Aorta (tissue), 5 donors: ENCODE measurements at regions of chr10 and their contacts with region 1.

Region 1: DNA sequence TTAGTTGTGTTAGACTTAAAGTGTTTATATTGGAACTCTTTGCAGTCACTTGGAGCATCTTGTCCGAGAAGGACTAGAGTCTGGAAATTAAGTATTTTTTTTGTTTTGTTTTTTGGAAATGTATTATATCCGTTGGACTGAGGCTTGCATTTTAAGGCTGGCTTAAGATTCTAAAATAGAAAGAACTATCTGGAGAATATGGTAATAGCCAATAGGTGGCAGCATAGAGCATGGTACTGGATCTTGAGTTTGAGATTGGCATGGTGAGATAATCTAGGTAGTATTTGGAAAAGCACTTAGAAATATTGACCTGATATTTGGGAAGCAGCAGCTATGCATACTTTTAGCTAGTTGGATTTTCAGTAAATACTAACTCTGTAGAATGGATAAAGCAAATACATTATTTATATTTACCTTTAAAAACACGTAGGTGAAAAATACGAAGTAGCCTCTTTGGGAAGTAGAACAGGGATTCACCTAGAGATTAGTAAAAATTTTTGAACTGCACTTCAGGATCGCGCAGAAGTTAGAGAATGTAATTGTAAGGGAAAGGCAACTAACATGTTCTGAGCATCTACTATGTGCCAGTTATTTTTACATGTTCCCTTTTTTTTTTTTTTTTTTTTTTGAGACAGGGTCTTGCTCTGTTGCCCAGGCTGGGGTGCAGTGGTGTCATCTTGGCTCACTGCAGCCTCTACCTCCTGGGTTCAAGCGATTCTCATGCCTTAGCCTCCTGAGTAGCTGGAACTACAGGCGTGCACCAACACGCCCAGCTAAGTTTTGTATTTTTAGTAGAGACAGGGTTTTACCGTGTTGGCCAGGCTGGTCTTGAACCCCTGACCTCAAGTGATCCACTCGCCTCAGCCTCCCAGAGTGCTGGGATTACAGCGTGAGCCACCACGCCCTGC is 78.6 kb downstream of the LCOR start:
- DNase-seq: no peak
- ATAC-seq: peak; percentile 73
- H3K4me3 ChIP-seq: no peak overlapping the region
- H3K27ac ChIP-seq: no peak overlapping the region
- H3K4me1 ChIP-seq: no peaks in the 10 kb centered on the region
- H3K27me3 ChIP-seq: no peaks in the 10 kb centered on the region

Region 2: GRCh38 chr10:96840841-96841518 is 69.8 kb before region 1 on chr10:
- intact Hi-C with region 1: loop called in 1 of 2 experiments (anchors 10 kb)
- DNase-seq: no peak
- ATAC-seq: no peak
- H3K4me3 ChIP-seq: no peak overlapping the region
- H3K27ac ChIP-seq: no peak overlapping the region
- H3K4me1 ChIP-seq: peaks cover 2 to 10% of the 10 kb centered on the region in 2 donors
- H3K27me3 ChIP-seq: no peaks in the 10 kb centered on the region